GM12878 (cell line): ENCODE measurements at regions of chr3 and their contacts with region 1.

Region 1: DNA sequence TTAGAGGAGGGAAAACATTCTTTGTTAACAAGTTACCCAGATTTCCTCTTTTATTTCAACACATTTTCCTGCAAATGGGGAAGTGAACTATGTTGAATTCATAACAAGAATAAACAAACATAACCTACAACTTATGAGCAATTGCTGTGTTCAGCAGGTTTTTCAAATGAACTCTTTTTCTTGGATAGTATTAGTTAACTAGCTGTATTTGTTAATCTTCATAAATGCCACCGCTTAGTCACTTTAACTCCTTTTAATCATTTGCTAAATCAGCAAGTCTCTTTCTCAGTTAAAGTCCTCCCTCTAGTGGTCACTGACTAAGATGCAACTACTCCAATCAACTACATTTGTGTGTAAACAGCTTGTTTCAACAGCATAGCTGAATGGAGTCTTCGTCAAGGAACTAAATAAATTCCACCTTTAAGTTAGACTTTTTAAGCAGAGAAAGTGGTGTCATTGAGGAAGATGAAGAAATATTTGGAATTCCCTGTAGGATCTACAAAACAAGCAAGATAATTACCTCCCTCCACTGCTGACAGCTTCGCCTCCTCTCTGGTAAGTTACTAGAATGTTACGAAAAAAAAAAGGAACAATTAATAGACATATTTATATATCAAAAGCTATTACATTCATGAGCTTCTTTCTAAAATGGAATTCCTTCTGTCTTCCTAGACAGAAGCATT is 1122.0 kb downstream of the ROBO1 start:
- DNase-seq: peak; percentile 39
- ATAC-seq: peak; percentile 82
- H3K4me3 ChIP-seq: no peak overlapping the region
- H3K27ac ChIP-seq: no peak overlapping the region
- H3K4me1 ChIP-seq: no peaks in the 10 kb centered on the region
- H3K27me3 ChIP-seq: no peaks in the 10 kb centered on the region
- CTCF ChIP-seq: peak; percentile 73 to 81 (median 75)
- EP300 ChIP-seq: peak in 1 of 2 experiments; percentile 45; a peak in 1 of 4 replicates
- POLR2A ChIP-seq: no peak
- RAD21 ChIP-seq: peak; percentile 85

Region 2: DNA sequence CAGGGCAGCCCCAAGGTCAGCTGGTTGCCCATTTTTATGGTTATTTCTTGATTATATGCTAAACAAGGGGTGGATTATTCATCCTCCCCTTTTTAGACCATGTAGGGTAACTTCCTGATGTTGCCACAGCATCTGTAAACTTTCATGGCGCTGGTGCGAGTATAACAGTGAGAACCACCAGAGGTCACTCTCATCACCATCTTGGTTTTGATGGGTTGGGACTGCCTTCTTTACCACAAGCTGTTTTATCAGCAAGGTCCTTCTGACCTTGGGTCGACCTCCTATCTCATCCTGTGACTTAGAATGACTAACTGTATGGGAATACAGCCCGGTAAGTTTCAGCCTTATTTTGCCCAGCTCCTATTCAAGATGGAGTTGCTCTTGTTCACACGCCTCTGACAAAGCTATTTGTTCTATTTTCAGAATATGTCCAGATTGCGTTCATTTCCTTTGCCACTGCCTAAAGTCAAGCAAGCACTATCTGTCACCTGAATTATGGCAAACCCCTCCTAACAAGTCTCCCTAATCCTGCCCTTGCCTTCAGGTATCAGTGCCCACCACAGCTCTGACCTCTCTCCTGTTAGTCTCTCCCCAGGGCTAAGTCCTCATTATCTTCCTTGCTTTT is 1297.4 kb before region 1 on chr3:
- CTCF ChIA-PET with region 1: interaction called, 13 read pairs
- POLR2A ChIA-PET with region 1: no interaction called
- RAD21 ChIA-PET with region 1: interaction called, 3 read pairs
- SMC1A ChIA-PET with region 1: interaction called, 3 read pairs
- in situ Hi-C with region 1: no loop called
- intact Hi-C with region 1: loop called (anchors 5 kb)
- DNase-seq: no peak
- ATAC-seq: peak; percentile 73
- H3K4me3 ChIP-seq: no peak overlapping the region
- H3K27ac ChIP-seq: no peak overlapping the region
- H3K4me1 ChIP-seq: no peaks in the 10 kb centered on the region
- H3K27me3 ChIP-seq: no peaks in the 10 kb centered on the region
- CTCF ChIP-seq: peak in 1 of 3 experiments; percentile 18; a peak in 2 of 6 replicates
- EP300 ChIP-seq: no peak
- POLR2A ChIP-seq: no peak
- RAD21 ChIP-seq: no peak

Region 3: GRCh38 chr3:78174821-78175220 is 470.9 kb before region 1 on chr3:
- CTCF ChIA-PET with region 1: no interaction called
- POLR2A ChIA-PET with region 1: no interaction called
- RAD21 ChIA-PET with region 1: no interaction called
- SMC1A ChIA-PET with region 1: no interaction called
- in situ Hi-C with region 1: no loop called
- intact Hi-C with region 1: loop called (anchors 10 kb)
- DNase-seq: no peak
- ATAC-seq: no peak
- H3K4me3 ChIP-seq: no peak overlapping the region
- H3K27ac ChIP-seq: no peak overlapping the region
- H3K4me1 ChIP-seq: no peaks in the 10 kb centered on the region
- H3K27me3 ChIP-seq: no peaks in the 10 kb centered on the region
- CTCF ChIP-seq: no peak
- EP300 ChIP-seq: no peak
- POLR2A ChIP-seq: no peak
- RAD21 ChIP-seq: no peak

Region 4: DNA sequence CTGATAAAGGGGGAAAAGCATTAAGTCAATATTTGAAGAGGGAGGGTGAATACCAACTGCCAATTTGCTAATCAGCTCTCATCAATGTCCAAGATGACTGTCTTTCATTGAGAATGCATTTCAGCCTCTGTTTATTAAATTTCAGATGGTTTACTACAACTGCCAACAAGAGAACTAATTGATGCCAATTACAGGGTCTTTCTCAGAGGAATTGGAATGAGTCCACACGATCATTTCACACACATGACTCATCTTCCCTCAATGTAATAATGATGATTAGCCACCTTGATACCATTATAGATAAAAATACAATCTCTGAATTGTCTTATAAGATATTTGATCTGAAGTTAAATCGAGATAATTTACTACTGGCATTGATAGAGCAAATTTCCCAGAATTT is 331.4 kb before region 1 on chr3:
- CTCF ChIA-PET with region 1: no interaction called
- POLR2A ChIA-PET with region 1: no interaction called
- RAD21 ChIA-PET with region 1: interaction called, 5 read pairs
- SMC1A ChIA-PET with region 1: interaction called, 3 read pairs
- in situ Hi-C with region 1: no loop called
- intact Hi-C with region 1: loop called (anchors 10 kb)
- DNase-seq: no peak
- ATAC-seq: no peak
- H3K4me3 ChIP-seq: no peak overlapping the region
- H3K27ac ChIP-seq: no peak overlapping the region
- H3K4me1 ChIP-seq: no peaks in the 10 kb centered on the region
- H3K27me3 ChIP-seq: no peaks in the 10 kb centered on the region
- CTCF ChIP-seq: no peak
- EP300 ChIP-seq: no peak
- POLR2A ChIP-seq: no peak
- RAD21 ChIP-seq: no peak

Region 5: DNA sequence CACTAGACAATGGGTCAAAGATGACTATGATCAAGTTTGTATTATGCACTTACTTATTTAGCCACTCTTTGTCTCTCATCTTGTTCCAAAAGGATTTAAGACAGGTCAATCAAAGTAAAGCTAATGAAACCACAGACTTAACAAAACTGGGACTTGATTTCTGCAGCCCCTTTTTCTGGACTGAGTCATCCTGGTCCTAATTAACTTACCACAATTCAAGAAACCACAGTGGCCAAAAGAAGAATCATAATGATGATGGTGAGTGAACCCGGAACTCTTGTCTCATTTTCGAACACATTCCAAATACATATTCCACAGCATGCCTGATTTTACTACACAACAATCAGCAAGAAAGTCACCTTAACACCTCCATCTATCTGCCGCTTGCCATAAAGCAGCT is 211.0 kb before region 1 on chr3:
- CTCF ChIA-PET with region 1: no interaction called
- POLR2A ChIA-PET with region 1: no interaction called
- RAD21 ChIA-PET with region 1: no interaction called
- SMC1A ChIA-PET with region 1: no interaction called
- in situ Hi-C with region 1: no loop called
- intact Hi-C with region 1: no loop called
- DNase-seq: no peak
- ATAC-seq: no peak
- H3K4me3 ChIP-seq: no peak overlapping the region
- H3K27ac ChIP-seq: no peak overlapping the region
- H3K4me1 ChIP-seq: no peaks in the 10 kb centered on the region
- H3K27me3 ChIP-seq: no peaks in the 10 kb centered on the region
- CTCF ChIP-seq: no peak
- EP300 ChIP-seq: no peak
- POLR2A ChIP-seq: no peak
- RAD21 ChIP-seq: no peak

Region 6: DNA sequence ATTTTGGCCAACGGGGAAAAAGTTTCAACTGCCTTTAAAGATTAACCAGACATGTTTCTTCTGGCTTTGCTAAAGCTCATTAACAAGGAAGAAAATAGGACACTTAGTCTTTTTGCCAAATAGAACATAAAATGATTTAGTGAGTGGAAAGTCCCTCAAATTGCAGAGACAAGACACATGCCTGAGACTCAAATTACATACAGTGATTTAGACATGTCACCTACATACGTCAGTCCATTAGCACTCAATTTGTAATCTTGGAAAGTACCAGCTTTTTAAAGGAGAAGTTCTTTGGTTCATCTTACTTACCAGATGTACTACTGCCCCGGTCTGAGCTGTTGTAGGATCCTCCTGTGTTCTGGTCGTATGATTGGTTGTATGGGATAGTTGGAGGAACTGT is 12.1 kb before region 1 on chr3:
- CTCF ChIA-PET with region 1: interaction called, 43 read pairs
- POLR2A ChIA-PET with region 1: interaction called, 4 read pairs
- RAD21 ChIA-PET with region 1: interaction called, 35 read pairs
- SMC1A ChIA-PET with region 1: interaction called, 61 read pairs
- in situ Hi-C with region 1: no loop called
- intact Hi-C with region 1: no loop called
- DNase-seq: no peak
- ATAC-seq: peak; percentile 94
- H3K4me3 ChIP-seq: no peak overlapping the region
- H3K27ac ChIP-seq: no peak overlapping the region
- H3K4me1 ChIP-seq: no peaks in the 10 kb centered on the region
- H3K27me3 ChIP-seq: no peaks in the 10 kb centered on the region
- CTCF ChIP-seq: no peak
- EP300 ChIP-seq: peak; percentile 63 to 65; a peak in 2 of 4 replicates
- POLR2A ChIP-seq: no peak
- RAD21 ChIP-seq: no peak

Region 7: DNA sequence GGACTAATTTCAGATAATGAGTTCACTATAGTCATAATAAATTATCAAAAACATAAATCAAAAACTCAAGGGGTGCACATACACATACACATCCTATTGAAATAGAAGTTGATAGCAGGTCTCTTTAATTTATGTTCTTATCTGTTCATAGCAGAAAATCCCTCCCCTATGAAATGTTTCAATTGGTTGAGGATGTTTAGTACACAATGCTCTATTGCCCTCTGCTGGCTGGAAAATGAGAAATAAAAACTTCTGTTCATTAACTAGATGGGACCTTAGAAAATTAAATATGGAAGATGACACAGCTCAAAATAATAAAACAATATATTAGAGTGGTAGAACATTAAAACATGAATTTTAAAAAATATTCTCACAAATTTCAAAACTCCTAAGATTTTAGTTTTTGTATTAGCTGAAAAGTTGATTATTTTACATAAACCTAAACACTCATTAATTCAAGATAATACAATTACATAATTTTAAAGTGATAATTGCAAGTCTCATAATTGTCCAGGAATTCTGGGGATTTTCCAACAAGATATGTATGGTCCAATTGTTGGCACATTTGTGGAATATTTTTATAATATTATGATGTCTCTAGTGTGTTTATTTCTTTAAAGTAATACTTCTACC is 387.0 kb after region 1 on chr3:
- CTCF ChIA-PET with region 1: interaction called, 20 read pairs
- POLR2A ChIA-PET with region 1: no interaction called
- RAD21 ChIA-PET with region 1: interaction called, 12 read pairs
- SMC1A ChIA-PET with region 1: interaction called, 36 read pairs
- in situ Hi-C with region 1: no loop called
- intact Hi-C with region 1: no loop called
- DNase-seq: no peak
- ATAC-seq: peak; percentile 78
- H3K4me3 ChIP-seq: no peak overlapping the region
- H3K27ac ChIP-seq: no peak overlapping the region
- H3K4me1 ChIP-seq: no peaks in the 10 kb centered on the region
- H3K27me3 ChIP-seq: no peaks in the 10 kb centered on the region
- CTCF ChIP-seq: peak; percentile 35 to 59 (median 35); a peak in 5 of 6 replicates
- EP300 ChIP-seq: no peak
- POLR2A ChIP-seq: no peak
- RAD21 ChIP-seq: peak; percentile 77